ENCODE measurements at regions of chr6 and their contacts with region 1.

Region 1: GRCh38 chr6:43723737-43724295 is 36.2 kb upstream of the MRPS18A start:
- DNase-seq: peak; percentile 79 to 87 (median 81)
- H3K4me3 ChIP-seq: no peak overlapping the region
- H3K27ac ChIP-seq: no peak overlapping the region
- H3K4me1 ChIP-seq: peaks cover 4 to 29% (median 27%) of the 10 kb centered on the region in 4 experiments
- H3K27me3 ChIP-seq: peaks cover 0 to 7% (median 0%) of the 10 kb centered on the region in 5 experiments

Region 2: GRCh38 chr6:43746613-43747102 is 22.8 kb after region 1 on chr6:
- CTCF ChIA-PET with region 1: interaction called, 10 read pairs
- POLR2A ChIA-PET with region 1: no interaction called
- DNase-seq: no peak
- H3K4me3 ChIP-seq: no peak overlapping the region
- H3K27ac ChIP-seq: no peak overlapping the region
- H3K4me1 ChIP-seq: peaks cover 0 to 8% (median 0%) of the 10 kb centered on the region in 4 experiments
- H3K27me3 ChIP-seq: no peaks in the 10 kb centered on the region

Region 3: DNA sequence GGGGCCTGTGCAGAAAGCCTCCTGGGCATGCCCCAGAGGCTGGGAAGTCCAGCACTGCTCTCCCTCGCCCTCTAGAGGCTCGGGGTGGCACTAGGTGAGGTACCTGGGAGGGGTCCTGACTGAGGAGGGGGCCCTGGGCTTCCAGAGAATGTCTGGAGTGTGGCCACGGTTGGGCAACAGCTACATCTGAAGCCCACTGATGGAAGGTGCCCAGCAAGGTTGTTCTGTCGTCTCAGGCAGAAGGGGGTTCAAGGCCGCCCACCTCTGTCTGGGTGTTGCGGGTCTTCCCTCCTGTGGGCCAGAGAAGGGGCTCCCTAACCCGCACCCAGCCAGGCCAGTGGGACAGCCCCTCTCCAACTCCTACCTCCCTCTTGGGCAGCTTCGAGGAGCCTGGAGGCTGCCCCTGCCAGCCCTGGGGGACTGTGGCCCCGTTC is 34.8 kb after region 1 on chr6:
- CTCF ChIA-PET with region 1: interaction called, 18 read pairs
- POLR2A ChIA-PET with region 1: no interaction called
- DNase-seq: peak in 2 of 3 donors; percentile 35 to 42
- H3K4me3 ChIP-seq: no peak overlapping the region
- H3K27ac ChIP-seq: no peak overlapping the region
- H3K4me1 ChIP-seq: peaks cover 0 to 6% (median 2%) of the 10 kb centered on the region in 4 experiments
- H3K27me3 ChIP-seq: peaks cover 0 to 3% (median 0%) of the 10 kb centered on the region in 5 experiments

Region 4: DNA sequence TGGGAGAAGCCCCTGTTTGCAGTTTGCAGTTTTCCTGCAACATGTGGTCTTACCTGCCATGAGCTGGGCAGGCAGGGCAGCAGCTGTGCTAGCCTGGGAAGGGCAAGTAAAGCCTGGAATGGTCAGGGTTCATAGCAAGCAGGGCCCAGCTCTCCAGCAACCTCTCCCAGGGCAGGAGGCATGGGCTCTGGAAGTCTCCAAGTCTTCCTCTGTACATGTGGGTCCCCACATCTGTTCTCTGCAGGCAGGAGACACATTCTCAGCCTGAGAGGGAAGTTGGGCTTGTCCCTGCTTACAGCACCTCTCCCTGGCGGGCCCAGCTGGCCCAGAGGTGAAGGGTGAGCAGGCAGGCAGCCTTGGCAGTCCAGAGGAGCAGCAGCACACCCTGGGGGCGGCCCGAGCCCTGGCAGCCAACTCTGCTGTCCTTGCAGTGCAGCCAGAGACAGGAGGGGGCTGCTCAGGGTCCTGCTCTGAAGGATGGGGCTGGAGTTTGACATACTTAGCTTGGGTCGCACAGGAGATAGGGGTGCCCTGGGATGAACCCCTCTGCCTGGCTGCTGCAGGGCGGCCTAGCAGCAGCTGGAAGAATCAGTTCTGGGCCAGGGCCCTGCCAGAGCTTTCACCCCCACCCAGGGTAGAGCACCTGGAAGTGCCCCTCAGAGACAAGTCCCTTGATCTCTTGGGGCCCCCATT is 227.4 kb after region 1 on chr6:
- CTCF ChIA-PET with region 1: interaction called, 11 read pairs
- POLR2A ChIA-PET with region 1: no interaction called
- DNase-seq: peak; percentile 63 to 77 (median 75)
- H3K4me3 ChIP-seq: no peak overlapping the region
- H3K27ac ChIP-seq: no peak overlapping the region
- H3K4me1 ChIP-seq: peaks cover 0 to 5% (median 0%) of the 10 kb centered on the region in 4 experiments
- H3K27me3 ChIP-seq: peaks cover 0 to 2% (median 0%) of the 10 kb centered on the region in 5 experiments